Activated CD4-positive, alpha-beta T cell treated with anti-CD3 and anti-CD28 coated beads for 36 hours (primary cell): ENCODE measurements at regions of chr1 and their contacts with region 1.

Region 1: DNA sequence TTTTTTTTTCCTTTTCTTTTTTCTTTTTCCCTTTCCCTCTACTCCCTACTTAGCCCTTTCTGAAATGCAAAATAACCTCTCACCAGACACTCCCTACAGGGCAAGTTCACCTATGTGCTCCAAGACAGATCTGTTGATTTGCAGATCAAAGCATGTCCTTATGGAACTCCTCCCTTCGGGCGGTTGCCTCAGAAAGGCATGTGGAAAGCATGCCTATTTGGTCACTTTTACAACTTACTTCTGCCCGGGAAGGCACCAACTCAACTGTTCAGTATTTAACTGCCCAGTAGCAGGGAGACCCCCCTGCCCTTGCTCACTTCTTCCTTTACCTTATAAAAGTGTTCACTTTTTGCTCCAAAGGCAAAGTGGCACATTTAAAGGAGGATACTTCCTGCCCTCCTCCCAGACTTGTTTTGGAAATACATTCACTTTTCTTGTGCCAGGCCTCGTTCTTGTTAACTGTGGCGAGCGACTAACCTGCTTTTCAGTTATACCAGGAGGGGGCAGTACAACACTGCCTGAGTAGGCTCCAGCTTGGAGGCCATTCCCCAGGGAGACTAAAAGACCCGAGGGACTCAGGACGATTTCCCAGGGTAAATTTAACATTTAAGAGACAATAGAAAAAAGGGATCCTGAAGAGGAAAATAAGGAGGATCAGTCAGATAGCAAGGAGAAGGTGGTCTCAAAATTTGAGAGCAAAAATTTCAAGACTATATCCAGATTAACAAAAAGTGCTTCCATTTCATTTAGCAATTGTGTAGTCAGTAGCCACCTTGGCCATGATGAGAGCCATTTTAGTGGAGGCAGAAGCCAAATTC is 12.3 kb upstream of the SLAMF7 start:
- DNase-seq: peak; percentile 77
- ATAC-seq: peak; percentile 72
- H3K4me3 Mint-ChIP-seq: no peak overlapping the region
- H3K27ac Mint-ChIP-seq: no peak overlapping the region
- H3K4me1 Mint-ChIP-seq: peaks cover 28% of the 10 kb centered on the region
- H3K27me3 Mint-ChIP-seq: no peaks in the 10 kb centered on the region

Region 2: DNA sequence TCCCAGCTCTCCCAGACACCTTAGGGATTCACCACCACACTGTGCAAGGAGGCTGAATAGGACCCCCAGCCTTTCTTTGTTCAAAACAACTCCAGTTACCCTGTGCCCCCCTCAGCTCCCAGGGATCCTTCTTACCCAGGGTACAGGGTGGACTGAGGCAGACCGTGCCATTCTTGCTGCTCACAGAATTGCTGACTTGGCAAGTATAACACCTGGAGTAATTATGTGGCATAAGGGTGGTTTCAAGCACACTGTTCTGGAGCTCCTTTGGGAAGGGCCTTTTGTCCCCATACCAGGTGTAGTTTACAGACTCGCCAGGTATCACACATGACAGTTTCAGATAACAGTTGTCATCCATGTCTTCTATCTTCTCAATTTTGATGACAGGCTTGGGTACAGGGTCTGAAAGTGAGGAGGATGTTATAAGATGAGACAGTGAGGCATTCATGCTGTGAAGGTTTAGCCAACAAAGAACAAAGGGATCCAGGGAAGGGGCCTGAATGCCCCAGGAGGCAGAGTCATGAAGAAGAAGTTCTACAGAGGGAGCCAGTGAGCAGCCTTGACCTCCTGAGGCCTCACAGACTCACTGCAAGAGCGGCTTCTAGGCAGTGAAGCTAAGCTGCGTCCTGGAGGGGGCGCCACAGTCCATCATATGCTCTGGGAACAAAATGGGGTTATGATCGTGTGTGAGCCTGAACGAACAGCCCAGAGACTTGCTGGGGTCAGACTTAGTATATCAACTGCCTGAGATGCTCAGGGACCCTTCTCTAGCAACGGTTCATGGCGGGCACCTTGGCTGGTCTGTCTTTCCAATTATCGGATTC is 45.4 kb before region 1 on chr1:
- CTCF ChIA-PET with region 1: interaction called, 42 read pairs
- POLR2A ChIA-PET with region 1: no interaction called
- intact Hi-C with region 1: loop called (anchors 1 to 2 kb)
- DNase-seq: peak; percentile 96
- ATAC-seq: peak; percentile 76
- H3K4me3 Mint-ChIP-seq: no peak overlapping the region
- H3K27ac Mint-ChIP-seq: peak overlapping the region; percentile 94
- H3K4me1 Mint-ChIP-seq: peaks cover 78% of the 10 kb centered on the region
- H3K27me3 Mint-ChIP-seq: no peaks in the 10 kb centered on the region

Region 3: GRCh38 chr1:160748181-160748877 is 21.6 kb after region 1 on chr1:
- CTCF ChIA-PET with region 1: interaction called, 10 read pairs
- POLR2A ChIA-PET with region 1: no interaction called
- intact Hi-C with region 1: loop called in 1 of 2 experiments (anchors 2 kb)
- DNase-seq: no peak
- ATAC-seq: no peak
- H3K4me3 Mint-ChIP-seq: no peak overlapping the region
- H3K27ac Mint-ChIP-seq: peak overlapping the region; percentile 53
- H3K4me1 Mint-ChIP-seq: peaks cover 86% of the 10 kb centered on the region
- H3K27me3 Mint-ChIP-seq: no peaks in the 10 kb centered on the region

Region 4: DNA sequence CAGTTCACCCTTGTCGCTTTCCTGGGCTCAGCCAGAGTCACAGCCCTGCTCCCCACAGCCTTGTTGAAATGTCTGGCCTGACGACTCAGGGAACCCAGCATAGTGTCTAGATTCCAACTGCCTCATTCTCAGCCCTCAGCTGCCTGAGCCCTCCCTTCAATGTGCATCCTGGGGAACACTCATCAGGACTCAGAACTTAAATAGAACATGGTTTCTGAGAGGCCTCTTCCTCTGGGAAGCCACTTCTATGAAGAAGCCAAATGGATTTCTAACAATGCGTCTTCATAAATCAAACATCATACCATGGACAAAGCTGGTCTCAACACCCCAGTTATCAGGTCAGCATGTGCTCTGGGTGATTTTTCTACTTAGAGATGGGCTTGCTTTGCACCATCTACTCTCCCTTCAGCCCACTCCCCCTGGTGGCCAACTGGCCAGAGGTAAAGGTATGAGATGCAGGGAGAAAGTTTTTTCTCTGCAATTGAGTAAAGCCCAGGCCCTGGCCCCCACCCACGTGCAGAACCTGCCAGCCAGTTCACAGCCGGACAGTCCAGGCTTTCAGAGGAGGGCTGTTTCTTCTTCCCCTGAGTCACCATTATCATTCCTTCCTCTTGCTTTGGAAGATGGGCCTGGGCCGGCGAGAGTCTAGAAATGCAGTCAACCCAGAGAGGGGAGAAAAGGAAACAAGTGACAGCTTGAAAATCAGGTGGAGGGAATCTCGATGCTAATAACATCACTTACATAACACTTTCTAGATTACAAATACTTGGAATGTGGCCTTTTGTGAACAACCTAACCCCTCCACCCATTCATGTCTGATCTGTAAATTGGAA is 103.8 kb after region 1 on chr1:
- CTCF ChIA-PET with region 1: interaction called, 68 read pairs
- POLR2A ChIA-PET with region 1: interaction called, 3 read pairs
- intact Hi-C with region 1: loop called (anchors 1 kb)
- DNase-seq: peak; percentile 92
- ATAC-seq: peak; percentile 83
- H3K4me3 Mint-ChIP-seq: no peak overlapping the region
- H3K27ac Mint-ChIP-seq: peak overlapping the region; percentile 44
- H3K4me1 Mint-ChIP-seq: peaks cover 18% of the 10 kb centered on the region
- H3K27me3 Mint-ChIP-seq: no peaks in the 10 kb centered on the region

Region 5: DNA sequence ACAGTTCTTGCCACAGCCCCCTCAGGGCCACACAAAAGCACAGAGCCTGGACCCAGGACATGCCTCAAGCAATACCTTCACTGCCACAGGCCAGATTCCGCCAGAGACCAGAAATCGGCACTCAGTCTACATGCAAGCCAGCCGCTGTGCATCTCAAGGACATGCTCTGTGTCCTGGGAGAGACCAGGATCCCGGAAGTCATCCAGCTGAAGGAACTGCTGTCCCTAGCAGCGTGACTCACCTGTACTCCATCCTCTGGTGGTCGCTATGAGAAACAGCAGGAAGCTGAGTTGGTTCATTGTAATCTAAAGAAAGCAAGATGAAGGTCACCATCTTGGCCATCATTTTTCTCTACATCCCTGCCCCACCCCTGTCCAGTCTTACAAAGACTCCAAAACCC is 157.9 kb after region 1 on chr1:
- CTCF ChIA-PET with region 1: interaction called, 31 read pairs
- POLR2A ChIA-PET with region 1: no interaction called
- intact Hi-C with region 1: loop called (anchors 2 to 5 kb)
- DNase-seq: peak; percentile 55
- ATAC-seq: peak; percentile 94
- H3K4me3 Mint-ChIP-seq: no peak overlapping the region
- H3K27ac Mint-ChIP-seq: no peak overlapping the region
- H3K4me1 Mint-ChIP-seq: peaks cover 10% of the 10 kb centered on the region
- H3K27me3 Mint-ChIP-seq: peaks cover 2% of the 10 kb centered on the region

Region 6: GRCh38 chr1:160997323-160998038 is 270.8 kb after region 1 on chr1:
- CTCF ChIA-PET with region 1: no interaction called
- POLR2A ChIA-PET with region 1: no interaction called
- intact Hi-C with region 1: loop called in 1 of 2 experiments (anchors 5 kb)
- DNase-seq: peak; percentile 71
- ATAC-seq: peak; percentile 81
- H3K4me3 Mint-ChIP-seq: no peak overlapping the region
- H3K27ac Mint-ChIP-seq: peak overlapping the region; percentile 58
- H3K4me1 Mint-ChIP-seq: peaks cover 18% of the 10 kb centered on the region
- H3K27me3 Mint-ChIP-seq: no peaks in the 10 kb centered on the region

Region 7: DNA sequence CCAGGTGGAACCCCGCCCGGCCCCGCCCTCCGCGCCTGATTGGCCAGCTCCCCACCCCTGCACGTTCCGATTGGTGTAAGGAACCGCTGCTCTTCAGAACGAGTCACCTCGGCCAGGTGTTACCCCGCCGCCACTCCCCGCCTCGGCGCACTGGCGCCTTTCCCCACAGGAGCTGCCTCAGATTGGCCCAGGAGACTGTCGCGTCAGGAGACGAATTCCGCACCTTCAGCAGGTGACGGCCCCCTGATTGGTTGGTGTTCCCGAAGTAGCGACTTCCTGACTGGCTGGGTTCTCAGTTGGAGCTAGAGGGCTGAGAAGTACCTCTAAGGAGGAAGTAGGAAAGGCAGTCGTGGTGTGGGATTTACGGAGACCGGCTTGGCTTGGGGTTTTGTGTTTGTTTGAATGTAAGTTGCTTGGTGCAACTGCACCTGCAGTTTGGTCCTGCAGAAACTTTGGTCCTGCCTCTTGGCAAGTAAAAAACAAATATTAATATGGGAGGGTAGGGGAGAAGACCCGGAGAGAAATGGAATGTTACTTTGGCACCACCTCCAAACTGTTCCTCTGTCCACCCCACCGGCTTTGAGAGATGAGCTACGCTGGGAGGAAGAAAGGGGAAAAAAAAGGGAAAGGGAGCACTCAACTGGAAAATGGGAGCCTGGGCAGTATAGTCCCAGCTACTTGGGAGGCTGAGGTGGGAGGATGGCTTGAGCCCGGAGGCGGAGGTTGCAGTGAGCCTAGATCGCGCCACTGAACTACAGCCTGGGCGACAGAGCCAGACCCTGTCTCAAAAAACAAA is 294.7 kb after region 1 on chr1:
- CTCF ChIA-PET with region 1: no interaction called
- POLR2A ChIA-PET with region 1: no interaction called
- intact Hi-C with region 1: no loop called
- DNase-seq: peak; percentile 94
- ATAC-seq: peak; percentile 92
- H3K4me3 Mint-ChIP-seq: peak overlapping the region; percentile 87
- H3K27ac Mint-ChIP-seq: peak overlapping the region; percentile 86
- H3K4me1 Mint-ChIP-seq: peaks cover 33% of the 10 kb centered on the region
- H3K27me3 Mint-ChIP-seq: no peaks in the 10 kb centered on the region